IMR-90 (cell line): ENCODE measurements at regions of chr15 and their contacts with region 1.

Region 1: GRCh38 chr15:31488426-31489204 is 162.0 kb downstream of the KLF13 start:
- DNase-seq: peak; percentile 91
- ATAC-seq: peak; percentile 86
- H3K4me3 ChIP-seq: no peak overlapping the region
- H3K27ac ChIP-seq: no peak overlapping the region
- H3K4me1 ChIP-seq: peaks cover 2% of the 10 kb centered on the region
- H3K27me3 ChIP-seq: peaks cover 8% of the 10 kb centered on the region; the same call in 1 of the 2 replicates
- CTCF ChIP-seq: peak; percentile 99
- POLR2A ChIP-seq: no peak
- RAD21 ChIP-seq: peak; percentile 94

Region 2: GRCh38 chr15:30650012-30650929 is 838.3 kb before region 1 on chr15:
- CTCF ChIA-PET with region 1: interaction called, 4 read pairs
- POLR2A ChIA-PET with region 1: no interaction called
- dilution Hi-C with region 1: no loop called
- in situ Hi-C with region 1: loop called (anchors 25 kb)
- intact Hi-C with region 1: no loop called
- DNase-seq: peak; percentile 80
- ATAC-seq: no peak; the same call in 1 of the 2 replicates
- H3K4me3 ChIP-seq: no peak overlapping the region
- H3K27ac ChIP-seq: peak overlapping the region; percentile 65; the same call in 1 of the 2 replicates
- H3K4me1 ChIP-seq: peaks cover 5% of the 10 kb centered on the region
- H3K27me3 ChIP-seq: no peaks in the 10 kb centered on the region
- CTCF ChIP-seq: no peak
- POLR2A ChIP-seq: no peak
- RAD21 ChIP-seq: no peak

Region 3: DNA sequence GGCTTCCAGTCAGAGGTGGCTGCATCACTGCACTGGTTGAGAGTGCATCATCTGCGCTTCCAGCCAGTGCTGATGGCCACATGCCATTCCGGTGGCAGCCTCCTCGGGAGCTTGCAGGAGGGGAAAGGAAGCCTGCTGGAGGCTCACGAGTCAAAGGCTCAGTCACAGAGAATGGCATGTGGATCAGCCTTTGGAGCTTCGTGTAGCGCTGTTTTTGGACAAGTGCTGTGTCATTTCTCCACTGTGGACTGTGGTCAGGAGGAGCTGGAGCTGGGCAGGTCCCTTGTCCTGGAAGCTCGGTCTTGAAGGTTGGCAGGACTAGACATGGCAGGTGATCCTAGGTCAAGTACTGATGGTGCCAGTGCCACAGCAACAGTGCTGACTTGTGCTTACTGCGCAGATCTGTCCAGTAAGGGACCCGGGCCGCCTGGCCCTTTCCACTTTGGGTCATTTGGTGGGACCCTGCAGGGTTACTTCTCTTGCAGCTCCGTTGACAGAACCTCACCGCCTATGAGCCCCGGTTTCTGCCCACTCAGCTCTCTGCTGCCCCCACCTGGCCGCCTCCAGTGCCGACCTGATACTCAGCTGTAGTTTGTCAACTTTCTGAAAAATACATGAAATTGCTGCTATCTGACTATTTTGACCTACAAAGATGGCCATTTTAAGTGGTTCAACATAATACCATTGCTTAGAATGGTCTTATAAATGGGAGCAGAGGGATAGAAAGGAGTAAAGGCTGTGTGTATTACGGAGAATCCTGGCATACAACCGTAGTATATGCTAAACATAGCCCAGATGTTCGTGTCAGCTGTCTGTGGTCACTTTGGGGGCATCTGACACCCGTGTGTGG is 359.5 kb before region 1 on chr15:
- CTCF ChIA-PET with region 1: interaction called, 5 read pairs
- POLR2A ChIA-PET with region 1: no interaction called
- dilution Hi-C with region 1: no loop called
- in situ Hi-C with region 1: no loop called
- intact Hi-C with region 1: loop called (anchors 1 kb)
- DNase-seq: peak; percentile 57
- ATAC-seq: peak; percentile 96
- H3K4me3 ChIP-seq: no peak overlapping the region
- H3K27ac ChIP-seq: no peak overlapping the region
- H3K4me1 ChIP-seq: peaks cover 4% of the 10 kb centered on the region
- H3K27me3 ChIP-seq: peaks cover 16% of the 10 kb centered on the region
- CTCF ChIP-seq: peak; percentile 93
- POLR2A ChIP-seq: no peak
- RAD21 ChIP-seq: peak; percentile 92

Region 4: DNA sequence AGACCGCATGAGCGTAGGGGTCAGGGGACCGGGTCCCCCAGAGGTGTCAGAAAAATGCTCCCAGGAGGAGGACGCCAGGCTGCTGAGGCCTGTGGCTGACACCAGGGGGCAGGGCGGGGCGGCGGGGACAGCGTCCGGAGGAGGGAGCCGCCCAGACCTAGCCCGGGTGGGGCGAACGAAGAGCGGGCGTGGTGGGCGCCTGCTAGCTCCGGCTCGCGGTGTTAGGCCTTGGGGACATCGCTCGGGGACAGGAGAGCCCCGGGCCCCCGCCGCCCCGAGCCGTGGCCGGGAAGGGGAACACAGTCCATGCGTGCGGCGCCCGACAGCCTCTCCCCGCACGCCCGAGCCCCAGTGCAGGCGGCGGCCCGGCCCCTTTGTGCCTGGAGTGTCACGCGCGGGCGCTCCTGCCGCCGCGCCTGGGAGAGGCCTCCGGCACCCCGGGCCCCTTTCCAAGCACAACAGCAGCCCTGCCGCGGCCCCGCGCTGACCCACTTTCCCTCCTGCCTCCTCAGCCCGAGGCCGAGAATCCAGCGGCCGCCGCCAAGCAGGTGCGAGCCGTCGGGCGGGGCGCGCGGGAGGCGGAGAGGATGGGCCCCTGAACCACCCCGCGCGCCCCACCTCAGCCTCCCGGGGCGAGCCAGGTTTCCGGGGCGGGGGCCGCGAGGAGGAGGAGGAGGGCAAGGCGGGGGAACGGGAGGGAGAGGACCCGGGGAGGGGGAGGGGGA is 273.0 kb before region 1 on chr15:
- CTCF ChIA-PET with region 1: interaction called, 12 read pairs
- POLR2A ChIA-PET with region 1: no interaction called
- dilution Hi-C with region 1: no loop called
- in situ Hi-C with region 1: loop called (anchors 5 kb)
- intact Hi-C with region 1: loop called (anchors 1 kb)
- DNase-seq: no peak
- ATAC-seq: peak; percentile 94
- H3K4me3 ChIP-seq: peak overlapping the region; percentile 36
- H3K27ac ChIP-seq: no peak overlapping the region
- H3K4me1 ChIP-seq: peaks cover 1% of the 10 kb centered on the region; the same call in 1 of the 2 replicates
- H3K27me3 ChIP-seq: peaks cover 20% of the 10 kb centered on the region
- CTCF ChIP-seq: peak; percentile 66
- POLR2A ChIP-seq: no peak
- RAD21 ChIP-seq: peak; percentile 62

Region 5: GRCh38 chr15:31365655-31366127 is 122.9 kb before region 1 on chr15:
- CTCF ChIA-PET with region 1: interaction called, 4 read pairs
- POLR2A ChIA-PET with region 1: no interaction called
- dilution Hi-C with region 1: no loop called
- in situ Hi-C with region 1: loop called (anchors 10 kb)
- intact Hi-C with region 1: loop called (anchors 1 kb)
- DNase-seq: peak; percentile 72
- ATAC-seq: peak; percentile 95
- H3K4me3 ChIP-seq: no peak overlapping the region
- H3K27ac ChIP-seq: 0 out of 2 replicates have a peak overlapping the region, but pooled peaks have one; percentile 13
- H3K4me1 ChIP-seq: peaks cover 14% of the 10 kb centered on the region
- H3K27me3 ChIP-seq: no peaks in the 10 kb centered on the region
- CTCF ChIP-seq: peak; percentile 45
- POLR2A ChIP-seq: no peak
- RAD21 ChIP-seq: peak; percentile 51

Region 6: GRCh38 chr15:31472636-31473384 is 15.8 kb before region 1 on chr15:
- CTCF ChIA-PET with region 1: interaction called, 13 read pairs
- POLR2A ChIA-PET with region 1: no interaction called
- dilution Hi-C with region 1: no loop called
- in situ Hi-C with region 1: no loop called
- intact Hi-C with region 1: no loop called
- DNase-seq: peak; percentile 64
- ATAC-seq: peak; percentile 43
- H3K4me3 ChIP-seq: no peak overlapping the region
- H3K27ac ChIP-seq: peak overlapping the region; percentile 39
- H3K4me1 ChIP-seq: peaks cover 14% of the 10 kb centered on the region
- H3K27me3 ChIP-seq: no peaks in the 10 kb centered on the region
- CTCF ChIP-seq: no peak
- POLR2A ChIP-seq: no peak
- RAD21 ChIP-seq: no peak

Region 7: DNA sequence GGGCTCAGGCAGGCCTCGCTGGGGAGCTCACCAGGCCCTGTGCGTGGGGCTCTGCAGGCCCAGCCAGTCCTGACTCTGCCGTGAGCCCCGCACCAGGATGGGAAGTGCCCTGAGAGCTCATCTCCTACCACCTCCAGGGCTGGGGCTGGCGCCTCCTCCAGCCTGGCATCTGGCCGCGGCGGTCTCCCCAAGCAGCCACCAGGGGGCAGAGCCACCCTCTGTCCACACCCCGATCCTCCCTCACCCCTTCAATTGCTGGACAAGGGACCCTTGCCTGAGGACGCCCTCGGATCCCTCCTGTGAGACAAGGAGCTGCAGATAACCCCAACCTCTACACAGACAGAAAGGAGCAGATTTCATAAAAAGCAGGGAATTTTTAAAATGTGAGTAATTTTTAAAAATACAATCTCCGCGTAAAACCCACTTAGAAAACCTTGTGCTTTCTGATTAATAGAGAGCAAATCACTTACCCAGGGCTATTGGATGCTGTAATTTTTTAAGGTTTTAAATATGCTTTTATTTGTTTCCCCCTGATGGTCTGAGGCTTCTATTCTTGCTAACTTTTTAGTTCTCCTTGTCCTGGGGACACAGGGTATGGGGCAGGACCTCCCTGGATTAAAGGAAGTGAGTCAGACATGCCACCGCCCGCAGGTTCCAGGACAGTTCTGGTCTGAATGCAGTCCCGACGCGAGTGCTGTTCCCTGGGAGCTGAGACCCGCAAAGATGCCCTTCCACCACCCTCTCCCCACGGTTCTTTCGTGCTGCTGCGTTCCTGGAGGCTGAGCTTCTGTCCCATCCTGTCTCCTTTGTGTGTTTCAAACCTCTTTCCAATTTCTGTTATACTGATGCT is 489.4 kb after region 1 on chr15:
- CTCF ChIA-PET with region 1: no interaction called
- POLR2A ChIA-PET with region 1: no interaction called
- dilution Hi-C with region 1: no loop called
- in situ Hi-C with region 1: no loop called
- intact Hi-C with region 1: no loop called
- DNase-seq: peak; percentile 14
- ATAC-seq: peak; percentile 95
- H3K4me3 ChIP-seq: no peak overlapping the region
- H3K27ac ChIP-seq: no peak overlapping the region
- H3K4me1 ChIP-seq: no peaks in the 10 kb centered on the region
- H3K27me3 ChIP-seq: no peaks in the 10 kb centered on the region
- CTCF ChIP-seq: peak; percentile 68
- POLR2A ChIP-seq: no peak
- RAD21 ChIP-seq: peak; percentile 50

Region 8: DNA sequence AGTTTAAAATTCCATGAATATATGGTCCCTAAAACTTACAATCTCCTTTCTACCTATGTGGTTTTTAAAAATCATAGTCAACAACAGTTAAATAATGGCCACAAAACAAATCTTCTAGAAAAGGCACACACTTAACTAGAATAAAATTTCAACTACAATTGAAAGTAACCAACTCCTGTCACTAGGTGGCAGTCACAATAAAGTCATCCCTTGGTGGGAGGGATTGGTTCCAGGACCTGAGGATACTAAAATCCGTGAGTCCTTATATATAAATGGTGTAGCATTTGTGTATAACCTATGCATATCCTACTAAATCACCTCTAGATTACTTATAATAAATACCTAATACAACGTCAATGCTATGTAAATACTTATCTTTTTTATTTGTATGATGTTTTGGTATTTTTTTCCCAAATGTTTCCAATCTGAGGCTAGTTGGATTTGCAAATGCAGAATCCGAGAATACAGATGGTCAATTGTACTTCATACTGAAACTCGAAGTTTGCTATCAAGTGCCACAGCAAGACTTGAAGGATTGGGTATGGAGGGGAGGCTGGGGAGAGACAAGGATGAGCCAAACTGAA is 1533.3 kb after region 1 on chr15:
- CTCF ChIA-PET with region 1: no interaction called
- POLR2A ChIA-PET with region 1: no interaction called
- dilution Hi-C with region 1: no loop called
- in situ Hi-C with region 1: no loop called
- intact Hi-C with region 1: no loop called
- DNase-seq: peak; percentile 75
- ATAC-seq: peak; percentile 77
- H3K4me3 ChIP-seq: no peak overlapping the region
- H3K27ac ChIP-seq: peak overlapping the region; percentile 55; the same call in 1 of the 2 replicates
- H3K4me1 ChIP-seq: peaks cover 12% of the 10 kb centered on the region
- H3K27me3 ChIP-seq: no peaks in the 10 kb centered on the region
- CTCF ChIP-seq: peak; percentile 66
- POLR2A ChIP-seq: no peak
- RAD21 ChIP-seq: peak; percentile 75